ENCODE measurements at regions of chr18 and their contacts with region 1.

Region 1: GRCh38 chr18:63433334-63433866 is 11.1 kb upstream of the VPS4B start:
- DNase-seq: no peak
- ATAC-seq: no peak
- H3K4me3 ChIP-seq: no peak overlapping the region
- H3K27ac ChIP-seq: no peak overlapping the region
- H3K4me1 ChIP-seq: no peaks in the 10 kb centered on the region
- H3K27me3 ChIP-seq: peaks cover 0 to 5% of the 10 kb centered on the region in 2 experiments; a peak in 1 of 4 replicates
- CTCF ChIP-seq: no peak
- EP300 ChIP-seq: no peak
- POLR2A ChIP-seq: no peak
- RAD21 ChIP-seq: no peak

Region 2: GRCh38 chr18:63350230-63350629 is 83.2 kb before region 1 on chr18:
- CTCF ChIA-PET with region 1: interaction called, 3 read pairs
- POLR2A ChIA-PET with region 1: no interaction called
- RAD21 ChIA-PET with region 1: no interaction called
- SMC1A ChIA-PET with region 1: interaction called, 3 read pairs
- in situ Hi-C with region 1: no loop called
- intact Hi-C with region 1: loop called (anchors 5 kb)
- DNase-seq: no peak
- ATAC-seq: no peak
- H3K4me3 ChIP-seq: no peak overlapping the region
- H3K27ac ChIP-seq: no peak overlapping the region
- H3K4me1 ChIP-seq: no peaks in the 10 kb centered on the region
- H3K27me3 ChIP-seq: no peaks in the 10 kb centered on the region
- CTCF ChIP-seq: no peak
- EP300 ChIP-seq: no peak
- POLR2A ChIP-seq: no peak
- RAD21 ChIP-seq: no peak

Measured in GM12878 (cell line).